ENCODE measurements at regions of chr5 and their contacts with region 1.

Region 1: DNA sequence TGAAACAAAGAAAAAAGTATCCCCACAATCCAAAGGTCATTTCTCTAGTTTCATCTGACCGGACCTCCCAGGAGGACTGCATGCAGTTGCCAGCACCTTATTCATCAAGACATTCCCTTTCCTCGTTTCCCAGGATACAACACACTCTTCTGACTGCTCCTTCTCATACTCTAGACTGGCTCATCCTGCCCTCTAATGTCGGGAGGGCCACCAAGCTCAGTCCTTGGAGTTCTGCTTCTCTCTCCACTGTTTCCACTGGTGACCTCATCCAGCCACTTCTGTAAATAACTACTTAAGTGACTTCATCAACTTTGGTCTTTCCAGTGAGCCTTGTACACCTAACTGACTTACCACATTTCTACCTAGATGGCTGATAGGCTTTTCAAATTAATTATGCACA is 179.1 kb downstream of the EPB41L4A start:
- DNase-seq: no peak
- H3K4me3 ChIP-seq: no peak overlapping the region
- H3K27ac ChIP-seq: no peak overlapping the region
- H3K4me1 ChIP-seq: no peaks in the 10 kb centered on the region
- H3K27me3 ChIP-seq: peaks cover 6% of the 10 kb centered on the region
- CTCF ChIP-seq: peak in 1 of 2 donors; percentile 47

Region 2: DNA sequence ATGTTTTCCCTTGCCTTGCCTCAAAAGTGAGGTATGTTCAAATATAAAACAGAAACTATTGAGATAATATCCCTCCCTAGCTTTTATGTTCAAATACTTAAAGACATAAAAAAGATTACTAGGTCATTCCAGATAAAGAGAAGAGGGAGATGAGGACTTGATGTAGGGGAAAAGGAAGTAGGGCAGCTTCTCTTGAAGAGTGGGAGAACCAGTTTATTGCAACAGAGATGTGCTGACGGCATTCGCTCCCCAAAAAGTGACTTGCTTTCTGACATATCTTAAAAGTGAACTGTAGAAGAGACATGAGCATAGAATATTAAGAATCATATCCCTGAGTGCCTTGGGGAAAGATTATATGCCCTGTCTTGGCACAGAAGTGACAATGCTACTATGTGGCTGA is 152.8 kb before region 1 on chr5:
- CTCF ChIA-PET with region 1: no interaction called
- dilution Hi-C with region 1: no loop called
- in situ Hi-C with region 1: no loop called
- intact Hi-C with region 1: no loop called
- DNase-seq: no peak
- H3K4me3 ChIP-seq: no peak overlapping the region
- H3K27ac ChIP-seq: no peak overlapping the region
- H3K4me1 ChIP-seq: no peaks in the 10 kb centered on the region
- H3K27me3 ChIP-seq: no peaks in the 10 kb centered on the region
- CTCF ChIP-seq: no peak

Region 3: GRCh38 chr5:112276983-112277382 is 37.0 kb after region 1 on chr5:
- CTCF ChIA-PET with region 1: no interaction called
- dilution Hi-C with region 1: loop called (anchors 5 kb)
- in situ Hi-C with region 1: no loop called
- intact Hi-C with region 1: no loop called
- DNase-seq: no peak
- H3K4me3 ChIP-seq: no peak overlapping the region
- H3K27ac ChIP-seq: no peak overlapping the region
- H3K4me1 ChIP-seq: no peaks in the 10 kb centered on the region
- H3K27me3 ChIP-seq: peaks cover 4% of the 10 kb centered on the region
- CTCF ChIP-seq: no peak

Measured in mammary epithelial cell (primary cell).